HCT116 (cell line): ENCODE measurements at regions of chr10 and their contacts with region 1.

Region 1: DNA sequence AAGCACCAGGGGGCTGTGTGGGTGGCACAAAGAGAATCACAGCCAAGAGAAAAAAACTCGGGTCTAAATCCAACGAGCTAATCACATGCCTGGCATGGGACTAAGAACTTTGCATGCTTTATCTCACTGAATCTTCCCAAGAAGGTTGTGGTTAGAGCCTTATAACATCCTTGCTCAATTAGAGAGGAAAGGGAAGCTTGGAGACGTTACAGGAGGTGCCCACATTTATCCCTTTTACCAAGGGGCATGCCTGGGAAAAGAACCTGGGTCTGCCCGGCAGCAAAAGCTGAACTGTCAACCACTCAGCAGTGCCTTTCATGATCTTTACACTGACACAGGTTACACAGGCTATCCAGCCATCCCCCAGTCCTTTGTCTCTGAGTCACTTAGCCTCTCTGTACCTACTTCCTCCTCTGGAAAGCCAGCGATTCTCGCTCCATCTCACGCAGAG is 190.1 kb downstream of the PRPF18 start:
- DNase-seq: no peak
- ATAC-seq: no peak
- H3K4me3 ChIP-seq: no peak overlapping the region
- H3K27ac ChIP-seq: no peak overlapping the region
- H3K4me1 ChIP-seq: no peaks in the 10 kb centered on the region
- H3K27me3 ChIP-seq: peaks cover 10% of the 10 kb centered on the region; the same call in 1 of the 2 replicates
- CTCF ChIP-seq: no peak
- POLR2A ChIP-seq: no peak
- RAD21 ChIP-seq: no peak

Region 2: GRCh38 chr10:13528875-13529713 is 247.8 kb before region 1 on chr10 and contains the start of gene BEND7:
- CTCF ChIA-PET with region 1: no interaction called
- POLR2A ChIA-PET with region 1: no interaction called
- RAD21 ChIA-PET with region 1: no interaction called
- intact Hi-C with region 1: no loop called
- DNase-seq: no peak
- ATAC-seq: peak; percentile 81
- H3K4me3 ChIP-seq: peak within 1 kb of the TSS; percentile 50 to 64
- H3K27ac ChIP-seq: peak within 1 kb of the TSS; percentile 56; the same call in 1 of the 2 replicates
- H3K4me1 ChIP-seq: peaks cover 22 to 26% of the 10 kb centered on the region in 2 experiments
- H3K27me3 ChIP-seq: no peaks in the 10 kb centered on the region
- CTCF ChIP-seq: no peak
- POLR2A ChIP-seq: no peak
- RAD21 ChIP-seq: no peak
- total RNA-seq, gene BEND7: 13.8 TPM

Region 3: DNA sequence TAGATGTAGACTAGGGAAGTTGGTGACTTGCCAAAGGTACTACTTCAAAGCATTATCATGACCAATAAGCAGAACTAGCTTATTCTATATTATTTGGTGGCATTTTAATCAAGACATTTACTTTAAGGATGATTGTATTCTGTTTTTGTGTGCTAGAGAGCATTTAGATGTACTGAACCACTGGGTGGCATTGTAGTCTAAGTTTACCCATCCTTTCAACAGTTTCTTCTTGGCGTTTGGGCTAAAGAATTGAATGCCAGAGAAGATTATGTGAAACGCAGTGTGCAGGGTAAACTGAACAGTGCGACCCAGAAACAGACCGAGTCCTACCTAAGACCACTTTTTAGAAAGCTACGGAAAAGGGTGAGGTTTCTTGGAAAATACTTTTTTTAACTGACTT is 163.4 kb before region 1 on chr10:
- CTCF ChIA-PET with region 1: no interaction called
- POLR2A ChIA-PET with region 1: no interaction called
- RAD21 ChIA-PET with region 1: no interaction called
- intact Hi-C with region 1: loop called (anchors 1 kb)
- DNase-seq: no peak
- ATAC-seq: no peak
- H3K4me3 ChIP-seq: no peak overlapping the region
- H3K27ac ChIP-seq: no peak overlapping the region
- H3K4me1 ChIP-seq: no peaks in the 10 kb centered on the region
- H3K27me3 ChIP-seq: no peaks in the 10 kb centered on the region
- CTCF ChIP-seq: peak in 1 of 3 experiments; percentile 28; a peak in 1 of 6 replicates
- POLR2A ChIP-seq: no peak
- RAD21 ChIP-seq: no peak

Region 4: GRCh38 chr10:13659897-13660550 is 116.9 kb before region 1 on chr10:
- CTCF ChIA-PET with region 1: interaction called, 9 read pairs
- POLR2A ChIA-PET with region 1: no interaction called
- RAD21 ChIA-PET with region 1: interaction called in 1 of 2 experiments, 4 read pairs
- intact Hi-C with region 1: loop called (anchors 1 kb)
- DNase-seq: no peak
- ATAC-seq: peak; percentile 71
- H3K4me3 ChIP-seq: no peak overlapping the region
- H3K27ac ChIP-seq: no peak overlapping the region
- H3K4me1 ChIP-seq: no peaks in the 10 kb centered on the region
- H3K27me3 ChIP-seq: no peaks in the 10 kb centered on the region
- CTCF ChIP-seq: peak; percentile 74 to 96 (median 81)
- POLR2A ChIP-seq: no peak
- RAD21 ChIP-seq: peak; percentile 90

Region 5: GRCh38 chr10:13743101-13743693 is 33.7 kb before region 1 on chr10:
- CTCF ChIA-PET with region 1: no interaction called
- POLR2A ChIA-PET with region 1: no interaction called
- RAD21 ChIA-PET with region 1: no interaction called
- intact Hi-C with region 1: no loop called
- DNase-seq: no peak
- ATAC-seq: no peak
- H3K4me3 ChIP-seq: no peak overlapping the region
- H3K27ac ChIP-seq: no peak overlapping the region
- H3K4me1 ChIP-seq: no peaks in the 10 kb centered on the region
- H3K27me3 ChIP-seq: no peaks in the 10 kb centered on the region
- CTCF ChIP-seq: no peak
- POLR2A ChIP-seq: no peak
- RAD21 ChIP-seq: no peak